MCF 10A (cell line): ENCODE measurements at regions of chr5 and their contacts with region 1.

Region 1: GRCh38 chr5:113487781-113488644 is at the start of gene MCC:
- DNase-seq: peak; percentile 80
- H3K4me3 Mint-ChIP-seq: peak within 1 kb of the TSS; percentile 90
- H3K27ac Mint-ChIP-seq: peak within 1 kb of the TSS; percentile 82
- H3K4me1 Mint-ChIP-seq: peaks cover 20% of the 10 kb centered on the region
- H3K27me3 Mint-ChIP-seq: no peaks in the 10 kb centered on the region
- CTCF ChIP-seq: no peak
- total RNA-seq, gene MCC: 25.3 and 28.2 TPM in 2 replicates

Region 2: DNA sequence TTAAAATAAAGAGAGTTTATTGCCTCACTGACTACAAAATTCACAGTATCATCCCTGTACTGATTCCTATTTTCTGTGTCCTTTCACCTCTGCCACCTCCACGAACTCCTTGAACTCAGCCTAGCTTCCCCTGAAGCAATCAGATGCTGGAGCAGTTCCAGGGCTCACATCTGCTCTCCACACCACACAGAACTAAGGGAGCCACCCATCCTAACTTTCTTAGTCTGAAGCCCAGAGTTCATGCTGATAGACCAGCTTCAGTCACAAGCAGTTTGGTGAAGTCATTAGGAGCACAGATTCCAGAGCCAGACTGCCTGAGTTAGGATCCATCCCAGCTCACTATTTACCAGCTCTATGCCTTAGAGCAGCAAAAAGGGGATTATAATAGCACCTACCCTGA is 1053.4 kb before region 1 on chr5:
- CTCF ChIA-PET with region 1: no interaction called
- POLR2A ChIA-PET with region 1: no interaction called
- intact Hi-C with region 1: no loop called
- DNase-seq: peak; percentile 25
- H3K4me3 Mint-ChIP-seq: no peak overlapping the region
- H3K27ac Mint-ChIP-seq: no peak overlapping the region
- H3K4me1 Mint-ChIP-seq: peaks cover 7% of the 10 kb centered on the region
- H3K27me3 Mint-ChIP-seq: peaks cover 17% of the 10 kb centered on the region
- CTCF ChIP-seq: no peak

Region 3: DNA sequence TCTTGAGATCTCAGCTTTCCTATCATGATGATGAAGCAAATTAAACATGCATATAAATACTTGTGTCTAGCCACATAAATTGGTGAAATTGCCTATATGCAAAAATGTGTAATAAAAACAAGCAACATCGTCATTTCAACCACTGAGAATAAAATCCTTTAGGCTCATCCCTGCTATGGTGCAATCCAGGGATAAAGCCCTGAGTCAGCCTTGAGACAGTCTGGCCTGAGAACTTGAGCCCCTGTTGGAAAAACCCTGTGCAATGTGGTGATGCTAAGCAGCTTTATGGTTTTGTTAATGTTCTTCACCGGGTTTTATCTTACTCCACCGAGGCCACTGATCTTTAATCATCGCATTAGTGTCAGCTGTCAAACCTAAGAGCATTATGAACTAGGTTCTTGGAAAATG is 340.9 kb before region 1 on chr5:
- CTCF ChIA-PET with region 1: no interaction called
- POLR2A ChIA-PET with region 1: interaction called, 10 read pairs
- intact Hi-C with region 1: no loop called
- DNase-seq: peak; percentile 90
- H3K4me3 Mint-ChIP-seq: peak overlapping the region; percentile 2
- H3K27ac Mint-ChIP-seq: peak overlapping the region; percentile 49
- H3K4me1 Mint-ChIP-seq: peaks cover 26% of the 10 kb centered on the region
- H3K27me3 Mint-ChIP-seq: no peaks in the 10 kb centered on the region
- CTCF ChIP-seq: no peak

Region 4: DNA sequence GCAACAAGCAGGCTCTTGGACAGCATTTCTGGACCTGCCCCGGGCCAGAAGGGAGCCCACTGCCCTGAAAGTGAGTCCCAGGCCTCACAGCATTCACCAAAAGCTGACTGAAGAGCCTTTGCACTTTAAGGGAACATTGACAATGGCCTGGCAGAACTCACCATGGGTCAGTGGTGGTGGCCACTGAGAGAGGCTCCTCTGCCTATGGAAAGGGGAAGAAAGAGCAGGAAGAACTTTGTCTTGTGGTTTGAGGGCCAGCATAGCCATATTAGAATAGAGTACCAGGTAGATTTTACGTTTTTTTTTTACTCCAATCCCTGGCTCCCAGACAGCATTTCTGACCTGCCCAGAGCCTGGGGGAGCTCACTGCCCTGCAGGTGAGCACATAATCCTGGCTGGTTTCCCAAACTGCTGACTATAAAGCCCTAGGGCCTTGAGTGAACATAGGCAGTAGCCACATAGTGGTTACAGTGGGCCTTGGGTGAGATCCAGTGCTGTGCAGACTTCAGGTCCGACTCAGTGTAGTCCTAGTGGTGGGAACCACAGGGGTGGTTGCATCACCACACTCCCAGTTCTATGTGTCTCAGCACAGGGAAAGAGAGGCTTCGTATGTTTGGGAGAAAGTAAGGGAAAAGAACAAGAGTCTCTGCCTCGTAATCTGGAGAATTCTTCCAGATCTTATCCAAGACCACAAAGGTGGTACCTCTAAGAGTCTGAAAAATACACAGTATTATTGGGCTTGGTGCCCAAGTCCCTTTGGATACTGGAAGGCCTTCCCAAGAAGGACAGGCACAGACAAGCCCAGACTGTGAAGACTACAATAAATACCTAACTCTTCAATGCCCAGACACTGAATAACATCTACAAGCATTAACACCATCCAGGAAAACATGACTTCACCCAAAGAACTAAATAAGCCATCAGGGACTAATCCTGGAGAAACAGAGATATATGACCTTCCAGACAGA is 142.8 kb before region 1 on chr5:
- CTCF ChIA-PET with region 1: interaction called, 6 read pairs
- POLR2A ChIA-PET with region 1: interaction called, 22 read pairs
- intact Hi-C with region 1: no loop called
- DNase-seq: peak; percentile 92
- H3K4me3 Mint-ChIP-seq: peak overlapping the region; percentile 19
- H3K27ac Mint-ChIP-seq: peak overlapping the region; percentile 97
- H3K4me1 Mint-ChIP-seq: peaks cover 47% of the 10 kb centered on the region
- H3K27me3 Mint-ChIP-seq: no peaks in the 10 kb centered on the region
- CTCF ChIP-seq: no peak

Region 5: DNA sequence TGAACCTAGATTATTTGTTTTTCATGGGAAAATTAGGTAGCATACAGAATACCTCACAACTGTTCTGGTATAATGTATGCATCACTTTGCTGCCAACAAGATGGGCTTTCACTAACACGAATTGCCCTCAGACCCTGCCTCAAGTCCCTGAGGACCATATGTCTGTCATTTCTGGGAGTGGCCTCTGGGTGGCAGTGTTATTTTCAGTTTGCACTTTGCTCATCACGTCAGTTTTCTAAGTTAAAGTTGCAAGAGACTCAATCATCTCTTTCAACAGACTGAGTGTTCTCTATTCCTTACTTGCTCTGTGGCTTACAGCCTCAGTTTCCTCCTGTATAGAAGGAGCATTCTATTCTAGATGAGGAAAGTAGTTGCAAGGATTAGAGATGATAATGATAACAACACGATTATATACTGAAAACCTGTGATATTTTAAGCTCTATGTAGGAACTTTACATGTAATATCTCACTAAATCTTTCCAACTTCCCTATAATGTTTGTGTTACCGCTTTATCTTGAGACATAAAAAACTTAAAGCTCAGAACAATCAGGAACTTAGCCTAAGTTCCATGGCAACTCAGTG is 109.0 kb before region 1 on chr5:
- CTCF ChIA-PET with region 1: interaction called, 15 read pairs
- POLR2A ChIA-PET with region 1: interaction called, 18 read pairs
- intact Hi-C with region 1: no loop called
- DNase-seq: peak; percentile 73
- H3K4me3 Mint-ChIP-seq: no peak overlapping the region
- H3K27ac Mint-ChIP-seq: no peak overlapping the region
- H3K4me1 Mint-ChIP-seq: peaks cover 12% of the 10 kb centered on the region
- H3K27me3 Mint-ChIP-seq: no peaks in the 10 kb centered on the region
- CTCF ChIP-seq: peak; percentile 66

Region 6: GRCh38 chr5:113427871-113428574 is 60.0 kb before region 1 on chr5:
- CTCF ChIA-PET with region 1: interaction called, 5 read pairs
- POLR2A ChIA-PET with region 1: interaction called, 21 read pairs
- intact Hi-C with region 1: no loop called
- DNase-seq: no peak
- H3K4me3 Mint-ChIP-seq: no peak overlapping the region
- H3K27ac Mint-ChIP-seq: peak overlapping the region; percentile 73
- H3K4me1 Mint-ChIP-seq: peaks cover 11% of the 10 kb centered on the region
- H3K27me3 Mint-ChIP-seq: no peaks in the 10 kb centered on the region
- CTCF ChIP-seq: no peak

Region 7: GRCh38 chr5:113474100-113474728 is 13.8 kb before region 1 on chr5:
- CTCF ChIA-PET with region 1: interaction called, 3 read pairs
- POLR2A ChIA-PET with region 1: interaction called, 32 read pairs
- intact Hi-C with region 1: no loop called
- DNase-seq: no peak
- H3K4me3 Mint-ChIP-seq: no peak overlapping the region
- H3K27ac Mint-ChIP-seq: no peak overlapping the region
- H3K4me1 Mint-ChIP-seq: peaks cover 12% of the 10 kb centered on the region
- H3K27me3 Mint-ChIP-seq: no peaks in the 10 kb centered on the region
- CTCF ChIP-seq: no peak

Region 8: GRCh38 chr5:113507601-113508000 is 19.6 kb after region 1 on chr5:
- CTCF ChIA-PET with region 1: interaction called, 40 read pairs
- POLR2A ChIA-PET with region 1: interaction called, 37 read pairs
- intact Hi-C with region 1: loop called (anchors 2 kb)
- DNase-seq: no peak
- H3K4me3 Mint-ChIP-seq: no peak overlapping the region
- H3K27ac Mint-ChIP-seq: no peak overlapping the region
- H3K4me1 Mint-ChIP-seq: peaks cover 16% of the 10 kb centered on the region
- H3K27me3 Mint-ChIP-seq: no peaks in the 10 kb centered on the region
- CTCF ChIP-seq: no peak